Endothelial cell of umbilical vein (primary cell): ENCODE measurements at regions of chr1 and their contacts with region 1.

Region 1: GRCh38 chr1:220690140-220691025 is at the start of gene C1orf115:
- DNase-seq: peak; percentile 81
- H3K4me3 ChIP-seq: peak within 1 kb of the TSS; percentile 61 to 78 (median 78)
- H3K27ac ChIP-seq: no peak within 1 kb of the TSS
- H3K4me1 ChIP-seq: peaks cover 17% of the 10 kb centered on the region
- H3K27me3 ChIP-seq: no peaks in the 10 kb centered on the region
- CTCF ChIP-seq: peak; percentile 99
- POLR2A ChIP-seq: peak; percentile 54
- total RNA-seq, gene C1orf115: 15.8 and 16.4 TPM in 2 replicates

Region 2: GRCh38 chr1:220527908-220528678 is 162.3 kb before region 1 on chr1 and contains the start of gene MARK1:
- CTCF ChIA-PET with region 1: no interaction called
- POLR2A ChIA-PET with region 1: no interaction called
- dilution Hi-C with region 1: no loop called
- intact Hi-C with region 1: loop called (anchors 5 kb)
- DNase-seq: peak; percentile 37
- H3K4me3 ChIP-seq: peak within 1 kb of the TSS; percentile 64 to 94 (median 78)
- H3K27ac ChIP-seq: peak within 1 kb of the TSS; percentile 2
- H3K4me1 ChIP-seq: peaks cover 7% of the 10 kb centered on the region
- H3K27me3 ChIP-seq: peaks cover 10 to 23% of the 10 kb centered on the region in 2 experiments
- CTCF ChIP-seq: no peak
- POLR2A ChIP-seq: peak; percentile 28
- total RNA-seq, gene MARK1: 5.5 and 6.0 TPM in 2 replicates

Region 3: GRCh38 chr1:220680085-220680687 is 10.2 kb before region 1 on chr1:
- CTCF ChIA-PET with region 1: interaction called, 3 read pairs
- POLR2A ChIA-PET with region 1: no interaction called
- dilution Hi-C with region 1: no loop called
- intact Hi-C with region 1: loop called (anchors 1 kb)
- DNase-seq: peak; percentile 70
- H3K4me3 ChIP-seq: no peak overlapping the region
- H3K27ac ChIP-seq: no peak overlapping the region
- H3K4me1 ChIP-seq: no peaks in the 10 kb centered on the region
- H3K27me3 ChIP-seq: no peaks in the 10 kb centered on the region
- CTCF ChIP-seq: peak; percentile 60 to 64
- POLR2A ChIP-seq: no peak

Region 4: GRCh38 chr1:220748089-220748934 is 57.9 kb after region 1 on chr1 and contains the start of gene MTARC2:
- CTCF ChIA-PET with region 1: interaction called, 6 read pairs
- POLR2A ChIA-PET with region 1: no interaction called
- dilution Hi-C with region 1: no loop called
- intact Hi-C with region 1: loop called (anchors 1 kb)
- DNase-seq: peak; percentile 85
- H3K4me3 ChIP-seq: peak within 1 kb of the TSS; percentile 60 to 78 (median 74)
- H3K27ac ChIP-seq: peak within 1 kb of the TSS; percentile 42
- H3K4me1 ChIP-seq: peaks cover 14% of the 10 kb centered on the region
- H3K27me3 ChIP-seq: no peaks in the 10 kb centered on the region
- CTCF ChIP-seq: no peak
- POLR2A ChIP-seq: peak; percentile 88
- total RNA-seq, gene MTARC2: 12.0 and 14.1 TPM in 2 replicates